Activated CD8-positive, alpha-beta T cell treated with anti-CD3 and anti-CD28 coated beads for 36 hours (primary cell): ENCODE measurements at regions of chr22 and their contacts with region 1.

Region 1: DNA sequence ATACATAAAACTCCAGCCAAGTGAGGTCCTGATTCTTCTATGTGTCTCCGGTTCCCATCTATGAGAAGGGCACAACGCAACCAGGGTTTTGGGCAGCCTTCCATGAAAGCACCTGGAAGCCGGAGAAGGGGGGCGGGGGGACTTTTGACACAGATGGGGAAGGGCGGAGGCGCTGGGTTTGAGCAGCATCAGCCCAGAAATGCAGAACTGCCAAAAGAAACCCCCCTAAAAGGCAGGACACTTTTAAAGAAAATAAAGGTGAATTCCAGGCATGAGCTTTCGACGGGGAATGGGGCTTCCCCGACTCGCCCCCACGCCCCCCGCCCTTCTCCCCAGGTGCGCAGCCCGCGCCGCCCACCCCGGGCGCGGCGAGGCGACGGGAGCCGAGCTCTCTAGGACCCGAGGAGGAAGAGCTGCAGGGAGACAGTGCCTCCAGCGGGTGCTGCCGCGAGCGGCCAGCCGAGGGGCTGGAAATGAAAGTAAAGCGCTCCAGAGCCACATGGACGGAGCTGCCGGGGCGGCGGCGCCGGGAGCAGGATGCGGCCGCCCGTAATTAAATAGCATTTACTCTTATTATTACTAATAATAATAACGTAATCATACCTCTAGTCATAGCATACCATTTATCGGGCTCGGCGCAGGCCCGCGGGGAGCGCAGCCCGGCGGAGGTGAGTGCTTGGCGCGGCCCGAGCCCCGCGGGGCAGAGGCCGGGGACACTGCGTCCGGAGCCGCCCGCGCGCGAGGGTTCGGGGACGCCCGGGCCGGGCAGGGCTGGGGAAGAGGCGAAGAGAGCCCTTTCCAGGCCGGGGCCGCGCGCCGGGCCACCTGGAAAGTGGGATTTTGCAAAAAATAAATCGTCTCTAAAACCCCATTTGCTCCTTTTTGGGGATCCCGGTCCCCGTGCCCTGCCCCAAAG is at the start of gene ZC3H7B:
- DNase-seq: peak; percentile 87
- ATAC-seq: peak; percentile 96
- H3K4me3 Mint-ChIP-seq: peak within 1 kb of the TSS; percentile 77
- H3K27ac Mint-ChIP-seq: peak within 1 kb of the TSS; percentile 84
- H3K4me1 Mint-ChIP-seq: peaks cover 36% of the 10 kb centered on the region
- H3K27me3 Mint-ChIP-seq: no peaks in the 10 kb centered on the region
- CTCF ChIP-seq: peak; percentile 50
- total RNA-seq, gene ZC3H7B: 46.1 to 47.9 TPM

Region 2: GRCh38 chr22:41311487-41311886 is 10.1 kb after region 1 on chr22:
- CTCF ChIA-PET with region 1: interaction called, 12 read pairs
- POLR2A ChIA-PET with region 1: interaction called, 4 read pairs
- intact Hi-C with region 1: no loop called
- DNase-seq: no peak
- ATAC-seq: no peak
- H3K4me3 Mint-ChIP-seq: no peak overlapping the region
- H3K27ac Mint-ChIP-seq: peak overlapping the region; percentile 18
- H3K4me1 Mint-ChIP-seq: peaks cover 34% of the 10 kb centered on the region
- H3K27me3 Mint-ChIP-seq: no peaks in the 10 kb centered on the region
- CTCF ChIP-seq: no peak

Region 3: GRCh38 chr22:41381329-41382097 is 80.2 kb after region 1 on chr22 and contains the start of gene TEF:
- CTCF ChIA-PET with region 1: interaction called, 11 read pairs
- POLR2A ChIA-PET with region 1: interaction called, 3 read pairs
- intact Hi-C with region 1: no loop called
- DNase-seq: peak; percentile 99
- ATAC-seq: peak; percentile 90
- H3K4me3 Mint-ChIP-seq: peak within 1 kb of the TSS; percentile 85
- H3K27ac Mint-ChIP-seq: peak within 1 kb of the TSS; percentile 96
- H3K4me1 Mint-ChIP-seq: peaks cover 16% of the 10 kb centered on the region
- H3K27me3 Mint-ChIP-seq: no peaks in the 10 kb centered on the region
- CTCF ChIP-seq: no peak
- total RNA-seq, gene TEF: 1.4 to 2.0 TPM